K562 (cell line): ENCODE measurements at regions of chr18 and their contacts with region 1.

Region 1: DNA sequence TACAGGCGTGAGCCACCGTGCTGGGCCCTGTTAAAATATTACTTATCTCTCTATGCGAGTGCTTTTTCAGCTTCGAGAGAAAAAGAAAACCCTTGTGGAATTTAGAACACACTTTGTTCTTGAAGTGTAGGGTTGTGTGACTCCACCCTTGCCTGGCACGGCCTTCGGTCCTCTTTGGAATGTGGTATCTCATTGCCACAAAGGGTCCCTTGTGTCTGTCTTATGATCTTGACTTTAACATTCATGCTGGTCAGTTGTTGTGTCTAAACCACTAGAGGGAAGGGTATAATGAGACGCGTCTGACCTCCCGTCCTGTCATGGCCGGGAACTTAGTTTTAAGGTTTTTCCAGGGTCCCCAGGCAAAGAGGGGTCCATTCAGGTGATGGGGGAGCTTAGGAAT is 246.4 kb downstream of the VAPA start:
- DNase-seq: no peak
- ATAC-seq: no peak
- H3K4me3 ChIP-seq: no peak overlapping the region
- H3K27ac ChIP-seq: no peak overlapping the region
- H3K4me1 ChIP-seq: no peaks in the 10 kb centered on the region
- H3K27me3 ChIP-seq: peaks cover 15 to 28% of the 10 kb centered on the region in 2 experiments
- CTCF ChIP-seq: no peak
- EP300 ChIP-seq: no peak
- POLR2A ChIP-seq: no peak
- RAD21 ChIP-seq: no peak

Region 2: GRCh38 chr18:9913151-9913525 is 247.1 kb before region 1 on chr18:
- CTCF ChIA-PET with region 1: no interaction called
- POLR2A ChIA-PET with region 1: no interaction called
- in situ Hi-C with region 1: no loop called
- intact Hi-C with region 1: no loop called
- DNase-seq: no peak
- ATAC-seq: no peak
- H3K4me3 ChIP-seq: peak overlapping the region; percentile 85
- H3K27ac ChIP-seq: peak overlapping the region; percentile 97
- H3K4me1 ChIP-seq: peaks cover 4 to 6% of the 10 kb centered on the region in 2 experiments
- H3K27me3 ChIP-seq: no peaks in the 10 kb centered on the region
- CTCF ChIP-seq: no peak; a peak in 1 of 6 replicates
- EP300 ChIP-seq: no peak
- POLR2A ChIP-seq: no peak
- RAD21 ChIP-seq: no peak

Region 3: DNA sequence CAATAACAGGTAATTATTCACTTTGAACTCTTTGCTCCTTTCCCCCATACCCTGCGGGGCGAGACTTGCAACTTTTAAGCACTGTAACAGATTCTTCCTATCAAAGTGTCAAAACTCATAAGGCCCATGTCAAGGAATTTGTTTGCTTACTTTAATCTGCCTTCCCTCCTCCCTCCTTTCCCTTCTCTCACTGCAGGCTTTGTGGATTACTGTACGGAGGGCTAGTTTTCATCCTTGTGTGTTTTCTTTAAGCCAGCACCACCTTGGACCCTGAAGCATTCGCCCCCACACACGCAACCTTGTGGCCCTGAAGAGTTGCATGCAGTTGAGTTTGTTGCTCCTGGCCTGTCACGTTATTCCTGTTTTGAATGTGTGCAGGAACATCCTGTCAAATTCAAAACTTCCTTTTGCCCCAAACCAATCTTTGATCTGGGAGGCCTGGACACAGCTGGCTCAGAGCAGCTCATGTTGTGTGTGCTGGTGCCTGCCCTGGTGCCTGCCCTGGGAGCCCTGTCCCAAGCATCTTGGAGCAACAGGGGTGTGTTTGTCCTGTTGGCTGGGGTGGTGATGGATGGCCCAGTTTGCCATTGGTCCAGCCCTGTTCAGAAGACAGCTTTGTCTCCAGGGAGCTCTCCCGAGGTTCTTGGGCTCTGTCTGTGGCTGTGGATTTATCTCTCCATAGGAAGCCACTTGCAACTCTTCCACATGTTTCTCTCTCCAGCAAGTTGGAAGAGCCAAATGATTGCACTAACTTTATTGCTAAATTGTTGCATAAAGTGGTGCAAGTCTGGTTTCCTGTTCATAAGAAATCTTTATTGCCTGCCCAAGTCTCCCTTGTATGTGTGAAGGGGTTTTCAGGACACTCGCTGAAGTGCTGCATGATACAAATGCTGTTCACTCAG is 46.9 kb before region 1 on chr18:
- CTCF ChIA-PET with region 1: no interaction called
- POLR2A ChIA-PET with region 1: interaction called, 3 read pairs
- in situ Hi-C with region 1: no loop called
- intact Hi-C with region 1: loop called (anchors 2 kb)
- DNase-seq: no peak
- ATAC-seq: no peak
- H3K4me3 ChIP-seq: no peak overlapping the region
- H3K27ac ChIP-seq: no peak overlapping the region
- H3K4me1 ChIP-seq: no peaks in the 10 kb centered on the region
- H3K27me3 ChIP-seq: peaks cover 6 to 13% of the 10 kb centered on the region in 2 experiments; a peak in 4 of 5 replicates
- CTCF ChIP-seq: no peak
- EP300 ChIP-seq: no peak
- POLR2A ChIP-seq: no peak
- RAD21 ChIP-seq: no peak